ENCODE measurements at regions of chr6 and their contacts with region 1.

Region 1: GRCh38 chr6:37018198-37019064 is 13.0 kb downstream of the FGD2 start:
- DNase-seq: peak; percentile 85 to 98 (median 93)
- H3K4me3 ChIP-seq: peak overlapping the region in 15 of 59 donors; percentile 6 to 42 (median 21)
- H3K27ac ChIP-seq: peak overlapping the region; percentile 10 to 92 (median 82)
- H3K27me3 ChIP-seq: no peaks in the 10 kb centered on the region
- CTCF ChIP-seq: peak; percentile 46 to 95 (median 82)

Region 2: DNA sequence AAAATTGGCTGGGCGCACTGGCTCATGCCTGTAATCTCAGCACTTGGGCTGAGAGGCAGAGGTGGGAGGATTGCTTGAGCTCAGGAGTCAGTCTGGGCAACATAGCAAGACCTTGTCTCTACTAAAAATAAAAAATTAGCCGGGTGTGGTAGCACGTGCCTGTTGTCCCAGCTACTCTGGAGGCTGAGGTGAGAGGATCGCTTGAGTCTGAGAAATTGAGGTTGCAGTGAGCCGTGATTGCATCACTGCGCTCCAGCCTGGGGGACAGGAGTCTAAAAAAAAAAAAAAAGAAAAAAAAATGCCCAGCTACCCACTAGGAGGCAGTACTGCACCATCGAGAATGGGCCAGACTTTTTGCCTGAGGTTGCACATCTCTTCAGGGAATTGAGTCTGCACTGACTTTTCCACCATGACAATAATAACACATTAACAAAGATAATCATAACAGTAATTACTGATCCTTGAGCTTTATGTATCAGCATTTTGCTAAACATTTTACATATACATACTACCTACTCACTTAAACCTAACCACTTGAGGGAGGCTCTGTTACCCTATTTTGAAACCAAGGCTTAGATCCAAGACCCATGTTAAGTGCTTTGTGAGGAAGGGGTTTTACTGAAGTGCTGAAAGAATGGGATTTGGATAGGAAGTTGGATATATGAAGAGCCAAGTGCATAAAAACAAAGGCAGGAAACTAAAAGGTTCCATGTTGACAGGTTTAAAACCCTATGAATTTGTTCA is 403.2 kb before region 1 on chr6:
- intact Hi-C with region 1: loop called in 1 of 2 experiments (anchors 10 kb)
- DNase-seq: peak in 4 of 10 donors; percentile 12 to 40 (median 22)
- H3K4me3 ChIP-seq: no peak overlapping the region
- H3K27ac ChIP-seq: peak overlapping the region in 8 of 59 donors; percentile 1 to 40 (median 16)
- H3K27me3 ChIP-seq: no peaks in the 10 kb centered on the region
- CTCF ChIP-seq: peak; percentile 48 to 83 (median 71)

Region 3: DNA sequence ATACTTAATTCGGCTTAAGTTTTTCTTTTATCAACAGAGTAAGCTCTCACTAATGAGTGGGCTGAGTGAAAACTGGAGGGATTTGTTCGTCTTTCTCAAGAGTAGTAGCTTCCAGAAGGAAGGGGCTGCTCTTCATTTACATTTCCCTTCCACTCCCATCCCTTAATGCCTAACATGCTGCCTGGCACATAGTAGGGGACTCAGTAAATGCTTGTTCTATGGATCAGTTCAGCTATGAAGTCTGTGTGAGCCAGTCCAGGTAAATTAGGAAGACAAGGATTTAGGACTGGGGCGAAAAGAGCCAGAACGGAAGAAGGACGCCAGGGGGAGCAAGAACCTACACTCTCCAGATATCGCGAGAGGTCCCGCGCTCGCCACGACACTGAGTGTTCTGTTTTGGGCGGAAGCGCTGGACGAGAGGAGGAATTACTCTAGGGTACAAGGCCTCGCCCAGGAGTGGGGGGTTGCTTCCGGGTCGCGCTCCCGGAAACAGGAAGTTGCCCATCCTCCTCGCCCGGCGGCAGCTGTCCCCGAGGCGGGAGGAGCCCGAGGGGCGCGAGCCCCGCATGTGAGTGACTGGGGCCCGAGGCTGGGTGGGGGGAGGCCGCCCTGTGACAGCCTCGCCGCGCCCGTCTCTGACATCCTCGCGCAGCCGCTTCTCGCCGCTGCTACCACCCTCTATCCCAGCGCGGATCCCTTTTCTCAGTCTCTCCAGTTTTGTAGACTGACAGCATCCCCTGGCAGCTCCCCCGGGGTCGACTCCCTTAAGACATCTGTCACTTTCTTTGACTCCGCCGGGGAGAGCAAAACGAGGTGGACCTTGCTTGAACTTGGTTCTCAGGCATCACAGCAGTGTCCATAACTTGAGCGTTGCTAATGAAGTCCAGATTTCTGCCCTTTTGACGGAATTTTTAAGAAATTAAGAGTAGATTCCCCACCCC is 132.7 kb before region 1 on chr6 and contains the start of gene C6orf89:
- intact Hi-C with region 1: loop called (anchors 1 to 2 kb)
- DNase-seq: peak; percentile 97 to 99 (median 98)
- H3K4me3 ChIP-seq: peak within 1 kb of the TSS; percentile 64 to 97 (median 85)
- H3K27ac ChIP-seq: peak within 1 kb of the TSS; percentile 53 to 99 (median 94)
- H3K27me3 ChIP-seq: no peaks in the 10 kb centered on the region
- CTCF ChIP-seq: peak; percentile 82 to 98 (median 95)
- total RNA-seq, gene C6orf89: 52.9 to 88.0 (median 72.2) TPM

Region 4: GRCh38 chr6:36985808-36986703 is 32.4 kb before region 1 on chr6 and contains the start of gene MTCH1:
- intact Hi-C with region 1: loop called (anchors 2 to 5 kb)
- DNase-seq: peak; percentile 77 to 94 (median 90)
- H3K4me3 ChIP-seq: peak within 1 kb of the TSS; percentile 58 to 100 (median 99)
- H3K27ac ChIP-seq: peak within 1 kb of the TSS; percentile 88 to 100 (median 99)
- H3K27me3 ChIP-seq: no peaks in the 10 kb centered on the region
- CTCF ChIP-seq: peak in 26 of 56 donors; percentile 1 to 57 (median 20)
- total RNA-seq, gene MTCH1: 246 to 500 (median 376) TPM

Region 5: DNA sequence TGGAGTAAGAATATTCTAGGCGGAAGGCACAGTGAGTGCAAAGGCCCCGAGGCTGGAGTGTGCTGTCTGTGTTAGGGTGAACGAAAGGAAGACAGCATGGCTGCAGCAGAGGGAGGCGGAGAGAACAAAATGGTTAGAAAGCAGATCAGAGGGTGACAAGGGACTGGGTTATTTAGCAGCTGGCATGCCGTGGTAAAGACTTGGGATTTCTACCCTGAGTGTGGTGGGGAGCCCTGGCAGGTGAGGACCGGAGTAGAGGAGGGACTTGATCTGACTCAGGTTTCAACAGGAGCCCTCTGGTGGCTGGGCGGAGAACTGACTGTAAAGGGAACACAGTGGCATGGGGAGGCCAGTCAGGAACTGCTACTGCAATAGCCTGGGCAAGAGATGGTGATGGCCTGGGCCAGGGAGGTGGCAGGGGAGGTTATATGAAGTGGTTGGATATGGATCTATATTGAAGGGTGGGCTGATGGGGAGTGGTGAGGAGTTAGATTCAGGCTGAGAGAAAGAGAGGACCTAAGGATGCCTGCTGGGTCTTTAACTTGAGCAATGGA is 189.5 kb after region 1 on chr6:
- intact Hi-C with region 1: loop called (anchors 2 to 5 kb)
- DNase-seq: peak; percentile 46 to 86 (median 78)
- H3K4me3 ChIP-seq: no peak overlapping the region
- H3K27ac ChIP-seq: no peak overlapping the region
- H3K27me3 ChIP-seq: no peaks in the 10 kb centered on the region
- CTCF ChIP-seq: peak; percentile 19 to 75 (median 62)

Measured in dorsolateral prefrontal cortex (tissue), 120 donors.